ENCODE measurements at regions of chr10 and their contacts with region 1.

Region 1: GRCh38 chr10:114876602-114877300 is 55.2 kb downstream of the FHIP2A start:
- DNase-seq: peak; percentile 68
- ATAC-seq: peak; percentile 94
- H3K4me3 ChIP-seq: no peak overlapping the region
- H3K27ac ChIP-seq: no peak overlapping the region
- H3K4me1 ChIP-seq: no peaks in the 10 kb centered on the region
- H3K27me3 ChIP-seq: no peaks in the 10 kb centered on the region
- CTCF ChIP-seq: peak; percentile 77

Region 2: DNA sequence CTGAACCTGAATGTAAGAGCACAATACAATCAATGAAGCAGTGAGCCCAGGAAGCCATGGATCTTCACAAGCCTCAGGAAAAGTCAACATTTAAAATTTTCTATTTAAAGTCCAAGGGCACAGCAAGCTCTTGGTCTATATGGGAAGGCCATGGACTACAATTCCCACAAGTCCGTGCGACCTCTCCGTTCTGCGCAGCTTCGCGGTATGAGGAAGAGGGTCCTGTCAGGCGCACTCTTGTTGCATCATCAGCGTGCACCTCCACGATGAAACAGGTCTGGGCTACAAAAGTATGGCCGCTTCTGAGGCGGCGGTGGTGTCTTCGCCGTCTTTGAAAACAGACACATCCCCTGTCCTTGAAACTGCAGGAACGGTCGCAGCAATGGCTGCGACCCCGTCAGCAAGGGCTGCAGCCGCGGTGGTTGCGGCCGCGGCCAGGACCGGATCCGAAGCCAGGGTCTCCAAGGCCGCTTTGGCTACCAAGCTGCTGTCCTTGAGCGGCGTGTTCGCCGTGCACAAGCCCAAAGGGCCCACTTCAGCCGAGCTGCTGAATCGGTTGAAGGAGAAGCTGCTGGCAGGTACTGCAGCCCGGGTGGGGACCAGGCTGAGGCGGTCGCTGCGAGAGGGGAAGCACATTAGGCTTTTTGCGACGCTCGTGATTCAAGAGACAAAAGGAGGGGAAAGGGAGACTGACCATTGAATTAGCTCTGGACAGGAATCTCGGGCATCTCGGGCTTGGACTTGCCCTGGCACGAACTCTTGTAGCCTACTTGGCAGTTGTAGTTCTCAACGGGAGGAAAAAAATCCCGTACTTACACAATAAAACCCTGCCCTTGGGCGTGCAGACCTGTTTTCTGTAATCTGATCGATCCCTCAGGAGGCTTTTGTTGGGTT is 61.5 kb after region 1 on chr10 and contains the start of gene TRUB1:
- CTCF ChIA-PET with region 1: no interaction called
- POLR2A ChIA-PET with region 1: no interaction called
- intact Hi-C with region 1: loop called (anchors 5 kb)
- DNase-seq: peak; percentile 89
- ATAC-seq: peak; percentile 99
- H3K4me3 ChIP-seq: peak within 1 kb of the TSS; percentile 92
- H3K27ac ChIP-seq: peak within 1 kb of the TSS; percentile 32
- H3K4me1 ChIP-seq: peaks cover 12% of the 10 kb centered on the region
- H3K27me3 ChIP-seq: no peaks in the 10 kb centered on the region
- CTCF ChIP-seq: no peak
- total RNA-seq, gene TRUB1: 21.7 and 28.0 TPM in 2 replicates

Region 3: DNA sequence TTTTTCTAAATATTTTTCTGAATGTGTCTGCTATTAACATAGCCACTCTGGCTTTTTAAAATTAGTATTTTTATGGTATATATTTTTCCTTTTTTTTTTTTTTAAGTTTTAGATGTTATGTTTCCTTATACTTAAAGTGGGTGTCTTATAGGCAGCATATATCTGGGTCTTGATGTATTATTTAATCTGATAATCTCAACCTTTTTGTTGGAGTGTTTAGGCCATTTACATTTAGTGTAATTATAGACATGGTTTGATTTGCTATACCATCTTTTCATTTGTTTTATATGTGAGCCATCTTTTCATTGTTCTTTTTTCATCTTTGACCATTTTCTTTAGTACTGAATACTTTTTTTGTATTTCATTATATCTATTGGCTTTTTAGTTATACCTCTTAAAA is 106.2 kb after region 1 on chr10:
- CTCF ChIA-PET with region 1: interaction called, 19 read pairs
- POLR2A ChIA-PET with region 1: no interaction called
- intact Hi-C with region 1: no loop called
- DNase-seq: no peak
- ATAC-seq: no peak
- H3K4me3 ChIP-seq: no peak overlapping the region
- H3K27ac ChIP-seq: no peak overlapping the region
- H3K4me1 ChIP-seq: no peaks in the 10 kb centered on the region
- H3K27me3 ChIP-seq: no peaks in the 10 kb centered on the region
- CTCF ChIP-seq: no peak

Region 4: DNA sequence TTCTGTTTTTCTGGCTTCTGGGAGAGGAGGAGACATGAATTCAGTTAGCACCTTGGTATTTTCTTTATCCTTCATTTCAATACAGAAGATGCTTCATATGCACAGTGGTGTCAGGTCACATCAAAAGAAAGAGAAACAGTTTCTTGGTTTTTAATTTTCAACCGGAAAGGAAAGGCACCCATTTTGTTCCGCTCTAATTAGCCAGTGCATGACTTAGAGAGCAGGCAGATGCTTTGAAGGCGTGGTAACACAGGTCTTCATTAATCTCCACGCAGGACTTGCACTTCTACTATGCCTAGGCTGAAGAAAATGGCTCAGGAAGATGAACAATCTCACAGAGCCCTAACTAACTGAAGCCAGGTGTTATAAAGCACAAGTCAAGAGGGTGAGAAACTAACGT is 146.0 kb after region 1 on chr10:
- CTCF ChIA-PET with region 1: no interaction called
- POLR2A ChIA-PET with region 1: no interaction called
- intact Hi-C with region 1: loop called (anchors 1 kb)
- DNase-seq: no peak
- ATAC-seq: no peak
- H3K4me3 ChIP-seq: no peak overlapping the region
- H3K27ac ChIP-seq: no peak overlapping the region
- H3K4me1 ChIP-seq: no peaks in the 10 kb centered on the region
- H3K27me3 ChIP-seq: peaks cover 20% of the 10 kb centered on the region; the same call in 1 of the 2 replicates
- CTCF ChIP-seq: no peak

Region 5: GRCh38 chr10:115129752-115130151 is 253.0 kb after region 1 on chr10:
- CTCF ChIA-PET with region 1: no interaction called
- POLR2A ChIA-PET with region 1: no interaction called
- intact Hi-C with region 1: loop called (anchors 1 kb)
- DNase-seq: peak; percentile 59
- ATAC-seq: no peak
- H3K4me3 ChIP-seq: no peak overlapping the region
- H3K27ac ChIP-seq: no peak overlapping the region
- H3K4me1 ChIP-seq: no peaks in the 10 kb centered on the region
- H3K27me3 ChIP-seq: no peaks in the 10 kb centered on the region
- CTCF ChIP-seq: peak; percentile 46